Dorsolateral prefrontal cortex (tissue), 120 donors: ENCODE measurements at regions of chr3 and their contacts with region 1.

Region 1: DNA sequence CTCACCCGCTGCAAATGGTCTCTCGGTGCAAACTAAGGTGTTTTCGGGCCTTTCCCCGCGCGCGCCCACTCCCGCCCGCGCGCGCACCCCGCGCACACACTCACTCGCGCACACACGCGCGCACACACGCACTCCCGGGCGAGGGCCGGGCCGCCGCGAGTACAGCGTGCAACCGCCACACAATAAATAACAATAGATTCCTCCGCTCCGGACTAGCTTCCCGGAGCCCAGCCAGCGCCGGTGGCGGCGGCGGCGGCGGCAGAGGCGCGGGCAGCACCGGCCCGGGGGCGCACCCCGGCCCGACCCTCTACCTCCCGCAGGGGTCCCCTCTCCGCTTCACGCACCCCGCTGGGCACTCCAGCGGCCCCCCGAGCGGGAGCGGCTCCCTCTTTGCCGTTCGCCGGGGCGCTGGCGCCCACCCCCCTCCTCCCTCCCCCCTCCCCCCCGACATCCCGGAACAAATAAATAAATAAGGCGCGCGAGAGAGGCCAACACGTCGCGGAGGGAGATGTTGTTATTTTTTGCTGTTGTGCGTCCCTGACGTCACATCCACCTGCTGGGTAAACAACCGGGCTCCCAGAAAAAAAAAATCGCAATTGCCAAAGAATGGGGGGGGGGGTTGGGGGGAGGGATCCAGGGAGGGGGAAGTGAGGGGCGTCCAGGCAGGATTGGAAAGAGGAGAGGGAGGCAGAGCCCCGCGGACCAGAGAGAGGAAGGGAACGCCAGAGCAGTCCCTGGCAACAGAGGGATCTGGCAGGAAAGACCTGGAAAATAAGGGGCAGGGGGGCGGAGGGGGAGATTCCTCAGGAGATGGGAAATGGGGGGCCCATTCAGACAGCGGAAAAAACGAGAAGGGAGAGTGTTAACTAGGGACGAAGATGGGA is at the start of gene FOXP1:
- DNase-seq: peak; percentile 61 to 82 (median 71)
- H3K4me3 ChIP-seq: peak within 1 kb of the TSS; percentile 68 to 93 (median 83)
- H3K27ac ChIP-seq: peak within 1 kb of the TSS; percentile 88 to 100 (median 98)
- H3K27me3 ChIP-seq: no peaks in the 10 kb centered on the region
- CTCF ChIP-seq: peak in 3 of 56 donors; percentile 4 to 33 (median 24)
- total RNA-seq, gene FOXP1: 84.2 to 160 (median 118) TPM

Region 2: DNA sequence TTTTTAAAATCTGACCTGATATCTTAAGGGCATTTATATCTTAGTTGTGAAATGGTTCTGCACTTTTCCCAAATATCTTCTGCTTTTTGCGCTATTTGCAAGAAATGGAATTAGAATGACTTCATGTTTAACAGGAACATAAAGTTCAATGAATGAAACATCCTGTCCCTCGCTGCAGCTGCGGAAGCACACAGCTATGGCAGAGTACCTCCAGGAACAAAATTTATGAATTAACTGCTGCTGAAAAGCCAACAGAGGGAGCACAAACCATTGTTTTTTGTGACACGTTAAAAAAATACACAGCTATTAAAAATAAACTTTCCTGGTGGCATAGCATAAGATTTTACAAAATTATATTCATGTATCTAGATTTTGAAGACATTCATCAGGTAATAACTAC is 867.0 kb before region 1 on chr3:
- intact Hi-C with region 1: loop called in 1 of 2 experiments (anchors 5 kb)
- DNase-seq: peak in 1 of 10 donors; percentile 10
- H3K4me3 ChIP-seq: no peak overlapping the region
- H3K27ac ChIP-seq: no peak overlapping the region
- H3K27me3 ChIP-seq: no peaks in the 10 kb centered on the region
- CTCF ChIP-seq: peak in 54 of 56 donors; percentile 26 to 70 (median 48)

Region 3: GRCh38 chr3:71022551-71023335 is 561.1 kb before region 1 on chr3:
- intact Hi-C with region 1: loop called (anchors 5 kb)
- DNase-seq: peak in 1 of 10 donors; percentile 40
- H3K4me3 ChIP-seq: no peak overlapping the region
- H3K27ac ChIP-seq: peak overlapping the region in 44 of 59 donors; percentile 1 to 91 (median 47)
- H3K27me3 ChIP-seq: no peaks in the 10 kb centered on the region
- CTCF ChIP-seq: peak in 52 of 56 donors; percentile 21 to 70 (median 48)

Region 4: DNA sequence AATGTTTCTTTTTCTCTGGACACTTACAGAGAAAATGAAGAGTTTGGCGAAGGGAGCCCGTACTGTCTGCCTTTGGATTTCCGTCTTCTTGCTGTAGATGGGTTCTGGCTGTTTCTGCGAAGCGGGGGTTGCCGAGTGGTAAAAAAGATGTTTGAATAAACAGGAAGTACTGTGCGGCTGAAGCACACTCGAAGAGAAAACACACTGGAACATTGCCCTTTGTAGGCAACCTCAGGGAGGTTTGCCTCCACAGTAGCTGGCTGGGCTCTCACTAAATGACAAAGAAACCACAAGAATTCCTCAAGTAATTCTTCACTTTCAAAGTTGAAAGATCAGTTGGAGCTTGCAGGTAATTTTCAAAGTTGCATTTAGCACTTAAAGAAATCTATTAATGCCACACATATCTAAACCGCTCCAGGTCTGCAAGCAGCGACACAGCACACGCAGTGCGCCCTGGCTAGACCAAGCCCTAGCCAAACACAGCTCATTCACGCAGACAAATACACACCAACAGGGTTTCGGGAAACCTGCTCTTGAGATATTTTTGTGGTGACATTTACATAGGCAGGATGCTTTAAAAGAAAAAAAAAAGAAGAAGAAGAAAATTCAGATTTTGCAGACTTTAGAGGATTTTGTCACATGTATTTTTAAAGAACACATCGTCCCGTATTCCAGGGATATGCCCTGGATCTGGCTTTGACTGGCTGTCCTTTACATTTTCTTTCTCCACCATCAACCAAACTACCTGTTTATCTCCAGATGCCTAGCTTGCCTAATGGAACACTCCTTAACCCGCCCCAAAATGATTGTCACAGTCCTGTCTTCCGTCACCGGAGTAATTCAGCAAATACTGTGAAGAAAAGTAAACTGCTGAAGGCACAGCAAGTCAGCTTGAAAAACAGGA is 453.1 kb before region 1 on chr3:
- intact Hi-C with region 1: loop called (anchors 5 kb)
- DNase-seq: peak in 7 of 10 donors; percentile 22 to 66 (median 49)
- H3K4me3 ChIP-seq: peak overlapping the region; percentile 30 to 75 (median 60)
- H3K27ac ChIP-seq: peak overlapping the region in 58 of 59 donors; percentile 22 to 93 (median 82)
- H3K27me3 ChIP-seq: no peaks in the 10 kb centered on the region
- CTCF ChIP-seq: peak in 1 of 56 donors; percentile 10

Region 5: GRCh38 chr3:71466483-71466882 is 117.3 kb before region 1 on chr3:
- intact Hi-C with region 1: loop called in 1 of 2 experiments (anchors 10 kb)
- DNase-seq: peak in 2 of 10 donors; percentile 47 to 50
- H3K4me3 ChIP-seq: peak overlapping the region in 28 of 59 donors; percentile 1 to 48 (median 22)
- H3K27ac ChIP-seq: peak overlapping the region in 4 of 59 donors; percentile 6 to 55 (median 23)
- H3K27me3 ChIP-seq: no peaks in the 10 kb centered on the region
- CTCF ChIP-seq: no peak

Region 6: DNA sequence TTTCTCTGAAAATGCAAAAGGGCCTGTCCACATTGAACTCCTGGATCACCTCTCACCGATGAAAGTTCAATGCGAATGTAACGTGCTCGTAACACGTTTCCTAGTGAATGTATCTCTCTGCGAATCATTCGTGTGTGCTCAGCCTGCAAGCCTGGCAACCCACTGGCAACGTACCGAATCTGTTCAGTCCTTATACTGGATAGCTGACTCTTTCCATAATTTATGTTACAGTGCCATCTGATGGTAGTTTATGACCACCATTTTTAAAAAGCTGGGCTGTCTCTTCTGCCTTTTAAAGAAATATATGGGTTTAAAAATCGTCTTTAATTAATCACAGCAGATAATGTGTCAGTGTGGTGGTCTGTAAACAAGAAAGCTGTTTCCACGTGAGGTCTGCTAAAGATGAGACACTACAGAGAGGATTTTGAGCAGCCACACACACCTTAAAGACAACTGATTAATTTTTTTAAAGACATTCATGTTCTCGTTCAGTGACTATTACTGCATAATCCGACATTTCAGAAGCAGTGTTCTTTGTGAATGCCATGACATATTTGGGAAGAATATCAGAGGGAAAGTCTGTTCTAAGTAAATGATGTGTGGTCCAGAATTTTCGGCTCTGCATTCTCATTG is 69.1 kb after region 1 on chr3:
- intact Hi-C with region 1: loop called in 1 of 2 experiments (anchors 2 kb)
- DNase-seq: peak in 7 of 10 donors; percentile 19 to 58 (median 46)
- H3K4me3 ChIP-seq: peak overlapping the region in 15 of 59 donors; percentile 1 to 48 (median 26)
- H3K27ac ChIP-seq: peak overlapping the region in 25 of 59 donors; percentile 2 to 59 (median 26)
- H3K27me3 ChIP-seq: no peaks in the 10 kb centered on the region
- CTCF ChIP-seq: peak; percentile 23 to 89 (median 68)